ENCODE measurements at regions of chr10 and their contacts with region 1.

Region 1: DNA sequence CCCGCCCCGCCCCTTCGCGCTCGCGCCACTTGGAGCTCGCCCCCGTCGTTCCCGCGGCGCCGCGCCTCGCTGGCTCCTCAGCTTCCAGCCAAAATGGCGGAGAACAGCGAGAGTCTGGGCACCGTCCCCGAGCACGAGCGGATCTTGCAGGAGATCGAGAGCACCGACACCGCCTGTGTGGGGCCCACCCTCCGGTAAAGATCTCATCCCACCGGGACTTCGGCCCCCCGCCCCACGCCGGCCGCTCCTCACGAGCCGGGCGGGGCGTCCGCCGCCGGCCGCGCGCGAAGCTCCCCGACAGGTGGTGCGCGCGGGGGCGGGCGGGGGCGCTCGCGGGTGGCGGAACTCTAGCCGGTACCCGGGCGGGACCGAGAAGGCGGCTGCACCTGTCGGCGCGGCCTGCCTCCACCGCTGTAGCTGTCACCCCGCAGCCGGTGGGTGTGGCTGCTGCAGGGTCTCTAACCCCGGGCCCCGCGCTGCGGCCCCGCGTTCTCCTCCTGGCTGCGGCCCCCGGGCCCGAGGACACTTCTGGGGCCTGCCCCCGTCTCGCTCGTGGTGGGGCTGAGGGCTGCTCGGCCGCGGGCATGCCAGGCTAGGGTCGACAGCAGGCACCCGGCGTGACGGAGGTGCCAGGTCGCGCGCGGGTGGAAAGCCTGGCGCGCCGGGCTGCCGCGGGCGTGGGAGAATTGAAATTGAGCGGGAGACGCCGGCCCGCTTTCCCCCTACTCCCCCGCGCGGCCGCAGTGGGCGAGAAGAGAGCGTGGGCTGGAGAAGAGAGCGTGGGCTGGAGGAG is at the start of gene EXOC6:
- DNase-seq: peak; percentile 78 to 93 (median 85)
- ATAC-seq: peak; percentile 84
- H3K4me3 ChIP-seq: peak within 1 kb of the TSS; percentile 66 to 76
- H3K4me3 Mint-ChIP-seq: peak within 1 kb of the TSS; percentile 87
- H3K27ac ChIP-seq: peak within 1 kb of the TSS; percentile 76 to 87
- H3K27ac Mint-ChIP-seq: peak within 1 kb of the TSS; percentile 91
- H3K4me1 ChIP-seq: peaks cover 11% of the 10 kb centered on the region
- H3K4me1 Mint-ChIP-seq: peaks cover 17% of the 10 kb centered on the region
- H3K27me3 ChIP-seq: no peaks in the 10 kb centered on the region
- H3K27me3 Mint-ChIP-seq: no peaks in the 10 kb centered on the region
- CTCF ChIP-seq: no peak
- total RNA-seq, gene EXOC6: 6.0 to 7.0 TPM

Region 2: DNA sequence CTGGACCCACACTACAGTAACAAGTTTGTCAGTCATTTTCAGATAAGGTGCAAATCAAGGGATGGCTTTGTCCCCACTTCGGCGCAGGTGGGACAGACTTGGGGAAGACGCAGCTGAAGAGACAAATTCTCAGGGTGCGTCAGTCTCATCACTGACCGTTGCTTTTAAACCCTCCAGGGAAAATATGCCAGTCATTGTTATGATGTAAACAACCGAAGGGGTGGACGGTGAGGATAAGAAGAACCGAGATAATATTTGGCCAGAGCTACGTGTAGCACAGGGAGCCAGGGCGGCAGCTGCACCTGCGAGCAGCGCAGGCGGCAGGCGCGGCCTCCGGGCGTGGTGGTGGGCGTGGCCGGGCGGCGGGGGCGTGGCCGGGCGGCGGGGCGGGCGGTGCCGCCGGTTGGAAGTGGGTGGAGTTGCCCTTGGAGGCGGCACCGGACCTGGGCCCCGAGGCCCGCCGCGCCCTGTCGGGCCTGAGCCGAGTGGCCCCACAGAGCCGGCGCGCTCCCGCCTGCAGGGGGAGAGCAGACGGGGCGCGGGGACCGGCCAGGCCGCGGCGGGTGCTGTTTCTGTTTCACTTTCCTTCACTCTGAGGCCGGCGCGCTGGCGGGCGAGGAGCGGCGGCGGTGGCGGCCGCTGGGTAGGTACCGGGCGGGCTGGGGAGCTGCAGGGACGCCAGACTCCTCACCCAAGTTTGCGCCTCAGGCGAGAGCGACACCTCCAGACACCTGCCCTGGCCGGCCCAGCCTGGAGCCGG is 1628.3 kb before region 1 on chr10 and contains the start of gene PCGF5:
- CTCF ChIA-PET with region 1: no interaction called
- POLR2A ChIA-PET with region 1: no interaction called
- intact Hi-C with region 1: loop called in 1 of 2 experiments (anchors 10 kb)
- DNase-seq: peak; percentile 87 to 97 (median 91)
- ATAC-seq: peak; percentile 94
- H3K4me3 ChIP-seq: peak within 1 kb of the TSS; percentile 66 to 80
- H3K4me3 Mint-ChIP-seq: peak within 1 kb of the TSS; percentile 89
- H3K27ac ChIP-seq: peak within 1 kb of the TSS; percentile 74 to 76
- H3K27ac Mint-ChIP-seq: peak within 1 kb of the TSS; percentile 91
- H3K4me1 ChIP-seq: peaks cover 32% of the 10 kb centered on the region
- H3K4me1 Mint-ChIP-seq: peaks cover 51% of the 10 kb centered on the region
- H3K27me3 ChIP-seq: no peaks in the 10 kb centered on the region
- H3K27me3 Mint-ChIP-seq: no peaks in the 10 kb centered on the region
- CTCF ChIP-seq: no peak
- total RNA-seq, gene PCGF5: 67.5 to 70.7 TPM

Region 3: DNA sequence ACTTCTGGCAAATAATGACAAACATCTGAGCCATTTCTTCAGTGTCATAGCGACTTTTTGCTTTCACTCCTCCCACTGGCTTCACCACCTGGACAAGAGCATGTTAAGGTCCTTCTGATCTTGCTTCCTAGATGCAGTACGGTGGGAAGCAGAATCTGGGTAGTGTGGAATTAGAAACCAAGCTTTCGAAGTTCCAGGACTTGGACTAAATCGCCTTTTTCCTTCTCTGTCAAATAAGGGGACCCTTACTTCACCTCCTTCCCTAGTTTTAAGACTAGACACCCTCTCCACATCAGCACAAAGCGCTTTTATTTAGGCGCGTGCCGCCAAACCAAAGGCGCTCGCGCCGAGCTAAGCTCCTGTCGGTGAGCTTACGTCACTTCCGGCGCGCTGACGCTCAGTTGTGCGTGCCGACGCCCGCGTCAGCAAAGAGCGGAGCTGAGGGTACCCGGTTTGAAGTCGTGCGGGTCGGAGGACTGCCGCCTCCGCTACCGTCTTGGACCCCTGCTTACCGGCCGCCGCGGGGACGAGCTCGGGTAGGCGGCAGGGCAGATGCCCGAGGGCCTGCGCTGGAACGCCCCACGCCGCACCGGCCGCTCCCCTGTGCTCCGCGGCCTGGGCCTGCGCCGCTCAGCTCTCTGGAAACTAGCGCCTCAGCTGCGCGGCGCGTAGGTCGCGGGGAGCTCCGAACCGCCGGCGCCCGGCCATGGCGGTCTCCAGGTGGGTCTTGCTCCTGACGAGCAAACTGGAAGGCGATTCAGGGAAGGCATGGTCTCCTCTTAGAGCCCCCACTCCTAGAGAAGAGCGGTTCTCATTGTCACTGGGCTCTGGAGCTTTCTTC is 925.0 kb before region 1 on chr10 and contains the start of gene BTAF1:
- CTCF ChIA-PET with region 1: no interaction called
- POLR2A ChIA-PET with region 1: interaction called, 5 read pairs
- intact Hi-C with region 1: loop called (anchors 5 to 10 kb)
- DNase-seq: peak; percentile 82 to 97 (median 93)
- ATAC-seq: peak; percentile 94
- H3K4me3 ChIP-seq: peak within 1 kb of the TSS; percentile 87 to 97
- H3K4me3 Mint-ChIP-seq: peak within 1 kb of the TSS; percentile 99
- H3K27ac ChIP-seq: peak within 1 kb of the TSS; percentile 92 to 97
- H3K27ac Mint-ChIP-seq: peak within 1 kb of the TSS; percentile 98
- H3K4me1 ChIP-seq: peaks cover 36% of the 10 kb centered on the region
- H3K4me1 Mint-ChIP-seq: peaks cover 50% of the 10 kb centered on the region
- H3K27me3 ChIP-seq: peaks cover 0 to 2% of the 10 kb centered on the region in 2 experiments
- H3K27me3 Mint-ChIP-seq: peaks cover 2% of the 10 kb centered on the region
- CTCF ChIP-seq: no peak
- total RNA-seq, gene BTAF1: 88.6 to 90.7 TPM

Region 4: GRCh38 chr10:92592761-92593618 is 255.6 kb before region 1 on chr10 and contains the start of gene KIF11:
- CTCF ChIA-PET with region 1: no interaction called
- POLR2A ChIA-PET with region 1: interaction called, 9 read pairs
- intact Hi-C with region 1: loop called (anchors 1 to 5 kb)
- DNase-seq: peak; percentile 94 to 99 (median 96)
- ATAC-seq: peak; percentile 87
- H3K4me3 ChIP-seq: peak within 1 kb of the TSS; percentile 62 to 82
- H3K4me3 Mint-ChIP-seq: peak within 1 kb of the TSS; percentile 97
- H3K27ac ChIP-seq: peak within 1 kb of the TSS; percentile 72 to 90
- H3K27ac Mint-ChIP-seq: peak within 1 kb of the TSS; percentile 99
- H3K4me1 ChIP-seq: peaks cover 20% of the 10 kb centered on the region
- H3K4me1 Mint-ChIP-seq: peaks cover 28% of the 10 kb centered on the region
- H3K27me3 ChIP-seq: no peaks in the 10 kb centered on the region
- H3K27me3 Mint-ChIP-seq: peaks cover 5% of the 10 kb centered on the region
- CTCF ChIP-seq: no peak
- total RNA-seq, gene KIF11: 0.36 to 0.38 TPM

Region 5: DNA sequence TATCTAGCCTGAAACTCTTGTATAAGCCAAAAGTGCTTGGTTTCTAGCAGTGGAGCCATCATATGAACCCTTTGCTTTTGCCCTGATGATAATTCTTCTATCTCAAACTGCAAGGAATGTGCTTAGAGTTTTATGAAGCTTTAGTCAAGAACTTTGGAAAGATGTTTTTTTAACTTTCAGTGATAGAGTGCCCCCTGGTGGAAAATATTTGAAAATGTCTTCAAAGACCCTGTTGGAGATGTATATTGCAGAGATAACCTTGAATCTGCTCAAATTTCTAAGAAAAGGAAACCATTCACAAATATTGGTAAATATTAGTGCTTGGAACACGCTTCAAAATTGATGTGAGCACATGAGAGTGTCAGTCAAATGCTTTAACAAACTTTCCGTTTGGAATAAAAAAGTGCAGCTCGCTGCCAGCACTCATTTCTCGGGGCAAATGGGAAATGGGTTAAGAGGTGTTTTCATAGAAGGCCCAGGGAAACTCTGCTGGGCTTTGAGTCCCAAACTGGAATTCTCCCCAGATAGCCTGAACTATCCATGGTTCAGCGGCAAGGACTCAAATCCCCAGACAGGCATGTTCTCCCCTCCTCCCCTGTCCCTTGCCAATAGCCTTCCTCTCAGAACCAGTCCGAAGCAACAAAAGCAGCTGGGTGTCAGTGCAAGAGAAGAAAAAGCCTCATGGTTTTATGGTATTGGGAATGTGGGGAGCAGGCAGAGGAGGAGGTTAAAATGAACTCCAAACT is 504.2 kb after region 1 on chr10:
- CTCF ChIA-PET with region 1: interaction called, 3 read pairs
- POLR2A ChIA-PET with region 1: no interaction called
- intact Hi-C with region 1: loop called in 1 of 2 experiments (anchors 2 kb)
- DNase-seq: peak in 2 of 9 experiments; percentile 35 to 50
- ATAC-seq: no peak
- H3K4me3 ChIP-seq: no peak overlapping the region
- H3K4me3 Mint-ChIP-seq: no peak overlapping the region
- H3K27ac ChIP-seq: no peak overlapping the region
- H3K27ac Mint-ChIP-seq: no peak overlapping the region
- H3K4me1 ChIP-seq: no peaks in the 10 kb centered on the region
- H3K4me1 Mint-ChIP-seq: no peaks in the 10 kb centered on the region
- H3K27me3 ChIP-seq: no peaks in the 10 kb centered on the region
- H3K27me3 Mint-ChIP-seq: peaks cover 21% of the 10 kb centered on the region
- CTCF ChIP-seq: peak; percentile 75

Region 6: GRCh38 chr10:94362360-94363250 is 1514.0 kb after region 1 on chr10 and contains the start of gene NOC3L:
- CTCF ChIA-PET with region 1: no interaction called
- POLR2A ChIA-PET with region 1: no interaction called
- intact Hi-C with region 1: loop called (anchors 5 to 10 kb)
- DNase-seq: peak; percentile 87 to 98 (median 96)
- ATAC-seq: peak; percentile 92
- H3K4me3 ChIP-seq: peak within 1 kb of the TSS; percentile 75 to 89
- H3K4me3 Mint-ChIP-seq: peak within 1 kb of the TSS; percentile 97
- H3K27ac ChIP-seq: peak within 1 kb of the TSS; percentile 66 to 89
- H3K27ac Mint-ChIP-seq: peak within 1 kb of the TSS; percentile 99
- H3K4me1 ChIP-seq: peaks cover 19% of the 10 kb centered on the region
- H3K4me1 Mint-ChIP-seq: peaks cover 40% of the 10 kb centered on the region
- H3K27me3 ChIP-seq: no peaks in the 10 kb centered on the region
- H3K27me3 Mint-ChIP-seq: peaks cover 5% of the 10 kb centered on the region
- CTCF ChIP-seq: peak; percentile 65
- total RNA-seq, gene NOC3L: 7.4 to 8.3 TPM

Measured in CD8-positive, alpha-beta T cell (primary cell).